ENCODE measurements at regions of chr3 and their contacts with region 1.

Region 1: DNA sequence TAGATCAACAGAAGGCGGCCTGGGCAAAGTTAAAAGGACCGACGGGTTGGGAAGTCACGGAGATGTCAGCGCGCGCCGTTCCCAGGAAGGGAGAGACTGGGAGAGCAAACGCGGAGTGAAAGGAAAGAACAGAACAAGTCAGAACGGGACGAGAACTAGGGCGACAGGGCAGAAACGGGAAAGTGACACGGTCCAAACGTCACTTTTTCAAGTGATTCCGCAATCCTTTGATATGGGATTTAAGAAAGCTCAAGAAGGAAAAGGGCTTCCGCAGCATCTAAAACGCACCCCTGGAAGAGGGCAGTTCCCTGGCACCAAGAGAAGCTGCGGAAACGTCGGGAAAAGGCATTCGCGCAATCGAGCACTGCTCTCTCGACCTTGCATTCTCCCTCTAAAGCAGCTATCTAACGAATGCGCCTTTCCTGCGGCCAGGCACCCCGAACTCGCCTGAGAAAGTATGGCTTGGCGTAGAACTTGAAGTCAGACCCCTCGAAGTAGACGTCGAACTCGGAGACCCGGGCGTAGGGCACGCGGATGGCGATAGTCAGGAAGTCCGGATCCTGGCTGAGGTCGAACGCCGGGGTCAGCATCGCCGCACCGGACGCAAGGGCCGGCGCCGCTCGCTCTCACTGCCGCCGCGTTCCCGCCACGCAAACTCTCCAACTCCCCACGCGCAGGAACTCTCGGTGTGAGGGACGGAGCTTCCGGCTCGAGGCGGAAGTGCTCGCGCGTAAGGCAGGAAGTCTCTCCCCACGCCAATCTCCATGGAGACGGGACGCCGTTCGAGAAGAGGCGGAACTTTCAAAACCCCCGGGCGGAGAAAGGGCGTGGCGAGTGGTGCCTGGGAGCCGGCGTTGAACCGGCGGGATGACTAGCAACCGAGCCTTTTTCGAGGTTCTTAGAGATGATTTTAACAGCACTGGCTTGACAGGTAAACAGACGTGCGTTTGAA is at the start of gene SHQ1:
- DNase-seq: peak; percentile 96
- H3K4me3 Mint-ChIP-seq: peak within 1 kb of the TSS; percentile 91
- H3K27ac Mint-ChIP-seq: peak within 1 kb of the TSS; percentile 89
- H3K4me1 Mint-ChIP-seq: peaks cover 32% of the 10 kb centered on the region
- H3K27me3 Mint-ChIP-seq: no peaks in the 10 kb centered on the region
- CTCF ChIP-seq: no peak
- total RNA-seq, gene SHQ1: 17.4 and 30.4 TPM in 2 replicates

Region 2: DNA sequence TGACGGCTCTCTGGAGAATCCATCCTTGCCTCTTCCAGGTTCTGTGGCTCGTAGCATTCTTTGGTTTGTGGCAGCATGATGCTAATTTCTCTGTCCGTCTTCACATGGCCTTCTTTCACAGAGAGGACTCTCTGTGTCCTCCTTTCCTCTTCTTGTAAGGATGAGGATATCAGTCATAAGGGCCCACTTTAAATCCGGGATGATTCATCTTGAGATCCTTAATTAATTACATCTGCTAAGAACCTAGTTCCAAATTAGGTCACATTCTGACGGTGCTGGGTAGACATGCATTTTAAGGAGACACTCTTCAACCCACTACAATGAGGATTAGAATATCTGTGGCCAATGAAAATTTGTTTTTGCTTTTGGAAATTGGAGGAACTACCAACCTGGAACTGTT is 24.2 kb after region 1 on chr3:
- CTCF ChIA-PET with region 1: interaction called, 10 read pairs
- POLR2A ChIA-PET with region 1: interaction called, 4 read pairs
- intact Hi-C with region 1: no loop called
- DNase-seq: no peak
- H3K4me3 Mint-ChIP-seq: no peak overlapping the region
- H3K27ac Mint-ChIP-seq: no peak overlapping the region
- H3K4me1 Mint-ChIP-seq: no peaks in the 10 kb centered on the region
- H3K27me3 Mint-ChIP-seq: peaks cover 8% of the 10 kb centered on the region
- CTCF ChIP-seq: no peak

Region 3: GRCh38 chr3:72938471-72939265 is 90.6 kb after region 1 on chr3:
- CTCF ChIA-PET with region 1: interaction called, 12 read pairs
- POLR2A ChIA-PET with region 1: interaction called, 3 read pairs
- intact Hi-C with region 1: loop called (anchors 1 kb)
- DNase-seq: peak; percentile 76
- H3K4me3 Mint-ChIP-seq: peak overlapping the region; percentile 13
- H3K27ac Mint-ChIP-seq: no peak overlapping the region
- H3K4me1 Mint-ChIP-seq: peaks cover 12% of the 10 kb centered on the region
- H3K27me3 Mint-ChIP-seq: no peaks in the 10 kb centered on the region
- CTCF ChIP-seq: peak; percentile 71

Region 4: GRCh38 chr3:73056014-73056844 is 208.2 kb after region 1 on chr3:
- CTCF ChIA-PET with region 1: interaction called, 65 read pairs
- POLR2A ChIA-PET with region 1: interaction called, 9 read pairs
- intact Hi-C with region 1: loop called (anchors 1 kb)
- DNase-seq: peak; percentile 41
- H3K4me3 Mint-ChIP-seq: no peak overlapping the region
- H3K27ac Mint-ChIP-seq: no peak overlapping the region
- H3K4me1 Mint-ChIP-seq: peaks cover 25% of the 10 kb centered on the region
- H3K27me3 Mint-ChIP-seq: no peaks in the 10 kb centered on the region
- CTCF ChIP-seq: peak; percentile 49

Region 5: GRCh38 chr3:73502609-73503583 is 654.9 kb after region 1 on chr3:
- CTCF ChIA-PET with region 1: no interaction called
- POLR2A ChIA-PET with region 1: no interaction called
- intact Hi-C with region 1: loop called (anchors 5 kb)
- DNase-seq: peak; percentile 73
- H3K4me3 Mint-ChIP-seq: no peak overlapping the region
- H3K27ac Mint-ChIP-seq: no peak overlapping the region
- H3K4me1 Mint-ChIP-seq: no peaks in the 10 kb centered on the region
- H3K27me3 Mint-ChIP-seq: peaks cover 10% of the 10 kb centered on the region
- CTCF ChIP-seq: peak; percentile 69

Measured in MCF 10A (cell line).